Activated CD4-positive, alpha-beta T cell treated with anti-CD3 and anti-CD28 coated beads, Interleukin-2, amount 10 ng/mL, durations not matched to agents 24 days and 14 days (primary cell): ENCODE measurements at regions of chr14 and their contacts with region 1.

Region 1: GRCh38 chr14:63641473-63642228 is at the start of gene WDR89:
- DNase-seq: peak; percentile 98
- H3K4me3 Mint-ChIP-seq: peak within 1 kb of the TSS; percentile 86
- H3K27ac Mint-ChIP-seq: peak within 1 kb of the TSS; percentile 93
- H3K4me1 Mint-ChIP-seq: peaks cover 24% of the 10 kb centered on the region
- H3K27me3 Mint-ChIP-seq: no peaks in the 10 kb centered on the region
- total RNA-seq, gene WDR89: 32.6 and 33.1 TPM in 2 replicates

Region 2: DNA sequence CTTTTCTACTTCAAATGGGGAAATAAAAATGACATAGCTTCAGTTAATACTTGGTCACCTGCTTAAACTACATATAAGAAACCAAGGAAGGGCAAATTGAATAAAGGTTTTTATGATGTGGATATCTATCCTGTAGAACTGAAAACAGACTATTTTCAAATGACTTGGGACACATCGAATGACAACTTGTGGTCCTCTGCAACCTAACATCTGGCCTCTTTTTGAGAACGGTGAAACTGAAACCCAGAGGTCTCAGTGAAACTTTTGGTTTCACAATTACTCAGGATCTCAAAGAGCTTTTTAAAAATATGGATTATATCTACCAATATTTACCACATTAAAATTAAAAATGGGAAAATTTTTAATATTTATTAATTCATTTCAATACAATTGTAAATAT is 163.6 kb before region 1 on chr14:
- intact Hi-C with region 1: loop called (anchors 2 kb)
- DNase-seq: peak; percentile 86
- H3K4me3 Mint-ChIP-seq: peak overlapping the region; percentile 42
- H3K27ac Mint-ChIP-seq: peak overlapping the region; percentile 79
- H3K4me1 Mint-ChIP-seq: peaks cover 43% of the 10 kb centered on the region
- H3K27me3 Mint-ChIP-seq: no peaks in the 10 kb centered on the region

Region 3: GRCh38 chr14:63663430-63664341 is 22.0 kb after region 1 on chr14:
- intact Hi-C with region 1: no loop called
- DNase-seq: peak; percentile 54
- H3K4me3 Mint-ChIP-seq: no peak overlapping the region
- H3K27ac Mint-ChIP-seq: no peak overlapping the region
- H3K4me1 Mint-ChIP-seq: no peaks in the 10 kb centered on the region
- H3K27me3 Mint-ChIP-seq: no peaks in the 10 kb centered on the region

Region 4: GRCh38 chr14:63677821-63678380 is 36.2 kb after region 1 on chr14:
- intact Hi-C with region 1: no loop called
- DNase-seq: no peak
- H3K4me3 Mint-ChIP-seq: no peak overlapping the region
- H3K27ac Mint-ChIP-seq: no peak overlapping the region
- H3K4me1 Mint-ChIP-seq: no peaks in the 10 kb centered on the region
- H3K27me3 Mint-ChIP-seq: no peaks in the 10 kb centered on the region

Region 5: DNA sequence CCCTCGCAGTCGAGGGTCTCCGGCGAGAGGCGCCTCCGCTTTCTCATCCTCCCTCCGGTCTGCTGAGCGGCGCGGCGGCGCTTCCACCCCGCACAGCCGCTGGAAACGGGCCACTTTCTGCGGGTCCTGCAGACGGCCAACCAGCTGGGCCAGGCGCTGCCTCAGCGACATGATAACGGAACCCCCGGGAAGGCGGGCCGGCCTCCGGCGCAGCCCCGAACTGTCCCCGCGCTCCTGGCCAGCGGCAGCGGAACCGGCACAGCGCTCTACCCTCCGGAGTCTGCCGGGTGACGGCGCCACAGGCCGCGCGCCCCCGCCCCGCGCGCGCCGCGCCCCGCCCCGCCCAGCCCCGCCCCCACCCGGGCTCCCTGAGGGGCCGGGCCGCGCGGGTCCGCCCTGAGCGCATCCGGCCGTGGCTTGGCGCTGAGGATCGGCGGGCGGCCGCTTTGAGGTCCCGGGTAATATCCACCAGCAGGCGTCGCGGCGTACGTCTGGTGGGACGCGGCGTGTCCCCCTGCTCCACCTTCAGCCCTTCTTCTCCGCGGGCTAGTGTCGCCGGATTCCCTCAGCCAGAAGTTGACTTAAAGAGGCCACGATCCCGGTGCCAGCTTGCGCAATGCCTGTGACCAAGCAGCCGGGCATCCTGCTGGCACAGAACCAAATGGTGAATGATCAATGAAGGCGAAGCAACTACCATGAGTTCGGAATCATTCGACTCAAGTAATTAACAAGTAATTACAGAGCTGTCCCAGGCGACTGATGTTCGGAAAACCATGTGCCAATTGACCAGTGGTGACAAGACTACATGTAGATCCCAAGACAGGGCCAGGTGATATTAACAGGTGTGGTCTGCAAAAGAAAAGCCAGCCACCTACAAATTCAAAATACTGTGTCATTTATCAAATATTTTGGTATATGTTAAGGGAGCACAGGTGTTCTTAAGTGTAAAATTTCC is 86.4 kb after region 1 on chr14 and contains the start of gene SGPP1:
- intact Hi-C with region 1: loop called (anchors 2 kb)
- DNase-seq: peak; percentile 94
- H3K4me3 Mint-ChIP-seq: peak within 1 kb of the TSS; percentile 100
- H3K27ac Mint-ChIP-seq: peak within 1 kb of the TSS; percentile 98
- H3K4me1 Mint-ChIP-seq: peaks cover 31% of the 10 kb centered on the region
- H3K27me3 Mint-ChIP-seq: peaks cover 19% of the 10 kb centered on the region
- total RNA-seq, gene SGPP1: 12.2 and 13.3 TPM in 2 replicates

Region 6: GRCh38 chr14:63852817-63853731 is 211.4 kb after region 1 on chr14 and contains the start of gene SYNE2:
- intact Hi-C with region 1: loop called (anchors 5 kb)
- DNase-seq: peak; percentile 96
- H3K4me3 Mint-ChIP-seq: peak within 1 kb of the TSS; percentile 96
- H3K27ac Mint-ChIP-seq: peak within 1 kb of the TSS; percentile 97
- H3K4me1 Mint-ChIP-seq: peaks cover 36% of the 10 kb centered on the region
- H3K27me3 Mint-ChIP-seq: peaks cover 14% of the 10 kb centered on the region
- total RNA-seq, gene SYNE2: 22.0 and 22.4 TPM in 2 replicates

Region 7: GRCh38 chr14:64005822-64006221 is 364.2 kb after region 1 on chr14:
- intact Hi-C with region 1: no loop called
- DNase-seq: no peak
- H3K4me3 Mint-ChIP-seq: no peak overlapping the region
- H3K27ac Mint-ChIP-seq: no peak overlapping the region
- H3K4me1 Mint-ChIP-seq: no peaks in the 10 kb centered on the region
- H3K27me3 Mint-ChIP-seq: no peaks in the 10 kb centered on the region

Region 8: DNA sequence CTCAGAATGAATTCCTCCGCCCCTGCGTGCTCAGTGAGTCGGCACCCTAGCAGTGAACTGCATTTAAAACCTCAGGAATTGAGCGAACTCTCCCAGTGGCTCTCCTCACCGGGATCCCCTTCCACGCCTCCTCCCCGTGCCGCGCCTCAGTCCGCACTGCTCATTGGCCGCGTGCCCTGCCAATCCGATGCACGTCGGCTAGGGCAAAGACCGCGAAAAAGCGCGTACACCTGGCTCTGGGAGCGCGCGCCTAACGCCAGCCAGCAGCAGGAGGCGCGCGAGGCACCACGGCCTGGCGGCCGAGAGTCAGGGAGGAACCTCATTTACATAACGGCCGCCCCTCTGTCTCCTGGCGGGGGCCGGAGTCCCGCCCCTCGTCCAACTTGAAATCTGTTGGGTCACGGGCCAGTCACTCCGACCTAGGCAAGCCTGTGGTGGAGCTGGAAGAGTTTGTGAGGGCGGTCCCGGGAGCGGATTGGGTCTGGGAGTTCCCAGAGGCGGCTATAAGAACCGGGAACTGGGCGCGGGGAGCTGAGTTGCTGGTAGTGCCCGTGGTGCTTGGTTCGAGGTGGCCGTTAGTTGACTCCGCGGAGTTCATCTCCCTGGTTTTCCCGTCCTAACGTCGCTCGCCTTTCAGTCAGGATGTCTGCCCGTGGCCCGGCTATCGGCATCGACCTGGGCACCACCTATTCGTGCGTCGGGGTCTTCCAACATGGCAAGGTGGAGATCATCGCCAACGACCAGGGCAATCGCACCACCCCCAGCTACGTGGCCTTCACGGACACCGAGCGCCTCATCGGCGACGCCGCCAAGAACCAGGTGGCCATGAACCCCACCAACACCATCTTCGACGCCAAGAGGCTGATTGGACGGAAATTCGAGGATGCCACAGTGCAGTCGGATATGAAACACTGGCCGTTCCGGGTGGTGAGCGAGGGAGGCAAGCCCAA is 898.8 kb after region 1 on chr14 and contains the start of gene HSPA2:
- intact Hi-C with region 1: loop called (anchors 2 kb)
- DNase-seq: peak; percentile 98
- H3K4me3 Mint-ChIP-seq: peak within 1 kb of the TSS; percentile 86
- H3K27ac Mint-ChIP-seq: peak within 1 kb of the TSS; percentile 93
- H3K4me1 Mint-ChIP-seq: peaks cover 20% of the 10 kb centered on the region
- H3K27me3 Mint-ChIP-seq: peaks cover 46% of the 10 kb centered on the region
- total RNA-seq, gene HSPA2: 8.1 TPM in 2 replicates